ENCODE measurements at regions of chr1 and their contacts with region 1.

Region 1: DNA sequence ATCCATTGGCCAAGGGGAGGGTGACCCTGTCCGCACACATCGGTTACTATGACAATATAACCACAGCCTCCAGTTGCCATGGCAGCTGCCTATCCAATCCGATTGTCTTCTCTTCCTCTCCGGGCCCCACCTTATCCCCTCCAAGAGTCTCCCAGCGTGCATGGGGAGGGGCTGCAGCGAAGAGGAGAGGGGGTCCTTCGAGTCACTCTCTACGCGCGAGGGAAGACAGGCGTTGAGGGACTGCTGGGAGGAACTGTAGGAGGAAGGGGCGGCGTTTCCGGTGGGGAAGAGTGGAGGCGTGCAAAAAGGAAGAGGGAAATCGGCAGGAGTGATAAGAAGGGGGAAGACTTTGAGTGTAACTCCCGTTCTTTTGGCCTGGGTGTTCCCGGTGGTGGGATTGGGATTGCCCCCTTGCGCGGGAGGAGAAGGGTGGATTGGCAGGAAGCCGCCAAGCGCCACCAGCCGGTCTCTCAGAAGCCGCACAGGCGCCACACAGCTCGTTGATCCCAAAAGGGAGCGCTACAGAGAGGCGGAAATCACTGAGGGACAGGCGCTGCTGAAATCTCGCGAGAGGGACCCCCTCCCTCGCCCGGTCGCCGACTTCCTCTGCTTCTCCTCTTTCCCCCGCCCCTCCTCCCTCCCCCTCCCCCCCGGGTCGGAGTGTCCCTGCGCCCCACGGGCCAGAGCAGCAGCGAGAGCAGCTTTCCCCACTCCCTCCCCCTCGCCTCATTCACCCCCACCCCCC is 384 bp upstream of the SMG7 start:
- DNase-seq: peak; percentile 94 to 99 (median 97)

Region 2: GRCh38 chr1:183164350-183164749 is 307.6 kb before region 1 on chr1:
- intact Hi-C with region 1: no loop called
- DNase-seq: no peak

Region 3: DNA sequence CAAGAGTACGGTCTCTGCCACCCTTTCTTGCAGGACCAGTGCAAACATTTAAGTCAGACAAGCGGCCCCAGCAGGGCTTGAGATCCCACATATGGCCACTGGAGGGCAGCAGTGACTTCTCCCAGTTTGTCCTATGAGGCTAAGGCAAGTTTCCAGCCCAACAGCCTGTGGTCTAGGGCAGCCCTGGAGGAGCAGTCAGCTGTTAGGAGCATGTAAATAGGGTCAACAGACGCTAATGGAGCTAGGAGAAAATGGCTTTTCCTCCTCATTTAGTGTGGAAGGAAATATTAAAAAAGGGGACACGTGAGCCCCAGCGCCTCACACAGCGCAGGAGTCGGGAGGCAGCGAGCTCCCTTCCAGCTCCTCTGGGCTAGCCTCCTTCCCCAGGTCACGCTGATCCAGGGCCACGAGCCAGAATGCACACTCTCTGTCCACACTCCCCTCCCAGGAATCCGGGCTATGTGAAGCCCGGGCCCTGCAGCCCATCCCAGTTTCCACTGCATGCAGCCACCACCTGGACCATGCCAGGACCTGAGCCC is 190.3 kb before region 1 on chr1:
- intact Hi-C with region 1: loop called (anchors 5 kb)
- DNase-seq: peak; percentile 47 to 95 (median 89)

Region 4: DNA sequence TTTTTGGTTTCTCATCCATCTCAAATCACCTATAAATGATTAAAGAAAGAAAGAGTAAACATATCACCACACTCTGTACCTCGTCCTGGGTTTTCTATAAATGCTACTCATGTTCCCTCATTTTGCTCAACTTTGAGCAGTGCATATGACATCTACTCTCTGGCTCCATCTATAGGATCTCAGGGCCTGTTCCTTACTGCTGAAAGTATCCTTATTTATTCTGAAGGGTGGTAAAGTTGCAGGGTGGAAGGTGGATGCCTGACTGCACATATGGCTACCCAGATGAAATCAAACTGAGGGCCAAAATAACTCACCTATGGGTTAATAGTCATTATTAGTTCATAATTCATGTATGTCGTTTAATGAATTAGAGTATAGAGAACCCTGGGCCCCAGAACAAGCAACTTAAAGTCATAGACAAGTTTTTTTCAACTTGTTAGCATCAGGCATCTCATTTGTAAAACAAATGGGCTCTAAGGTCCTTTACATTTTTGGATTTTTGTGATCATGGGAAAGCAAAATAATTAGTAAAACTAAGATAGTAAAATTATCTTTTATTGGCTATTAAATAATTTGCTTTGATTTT is 71.8 kb after region 1 on chr1:
- intact Hi-C with region 1: loop called (anchors 5 kb)
- DNase-seq: peak in 8 of 42 donors; percentile 21 to 62 (median 40)

Region 5: GRCh38 chr1:183568176-183569021 is 96.5 kb after region 1 on chr1:
- intact Hi-C with region 1: no loop called
- DNase-seq: no peak

Region 6: GRCh38 chr1:183628537-183628936 is 156.6 kb after region 1 on chr1:
- intact Hi-C with region 1: loop called (anchors 5 kb)
- DNase-seq: no peak

Region 7: DNA sequence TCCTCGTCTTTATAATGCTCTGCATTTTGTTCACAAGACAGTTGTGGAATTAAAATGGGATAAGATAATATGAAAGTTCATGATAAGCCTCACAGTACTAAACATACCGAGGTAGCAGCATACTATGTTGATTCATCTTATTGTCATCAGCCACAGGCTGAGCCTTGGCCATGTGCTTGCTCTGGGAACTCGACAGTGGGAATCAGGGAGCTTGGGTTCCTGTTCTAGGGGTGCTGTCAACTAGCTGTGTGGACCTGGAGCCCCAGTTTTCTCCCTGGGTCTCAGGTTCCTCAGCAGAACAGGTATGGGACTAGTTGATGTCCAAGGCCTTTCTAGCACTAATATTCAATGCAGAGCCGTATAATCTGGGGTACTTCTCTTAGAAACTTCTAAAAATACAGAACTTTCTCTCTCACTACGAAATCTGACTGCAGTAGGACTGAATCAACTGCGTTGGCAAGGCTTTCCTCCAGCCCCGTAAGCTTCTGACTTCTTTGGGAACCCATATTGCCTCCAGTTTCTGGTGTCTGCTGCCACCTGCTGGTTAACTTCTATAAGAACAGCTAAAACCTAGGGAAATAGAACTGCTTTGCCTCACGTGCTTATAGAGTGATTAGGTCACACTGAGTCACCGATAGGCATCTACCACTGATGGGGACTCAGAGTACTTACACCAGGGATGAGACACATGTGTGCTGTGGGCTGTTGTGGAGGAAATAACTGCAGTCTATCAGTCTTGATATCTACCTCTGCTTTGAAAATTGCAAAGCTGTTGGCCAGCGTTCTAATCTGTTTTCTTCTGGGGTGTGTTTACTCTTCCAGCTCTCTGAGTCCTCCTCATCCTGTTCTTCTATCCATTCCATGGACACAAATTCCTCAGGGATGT is 444.0 kb after region 1 on chr1:
- intact Hi-C with region 1: loop called (anchors 10 kb)
- DNase-seq: peak in 41 of 42 donors; percentile 48 to 94 (median 81)

Measured in head of caudate nucleus (tissue), 42 donors.